Activated CD4-positive, alpha-beta memory T cell treated with anti-CD3 and anti-CD28 coated beads for 36 hours (primary cell): ENCODE measurements at regions of chr3 and their contacts with region 1.

Region 1: GRCh38 chr3:19348929-19349564 is 200.7 kb downstream of the KCNH8 start:
- DNase-seq: no peak
- H3K4me3 Mint-ChIP-seq: no peak overlapping the region
- H3K27ac Mint-ChIP-seq: no peak overlapping the region
- H3K4me1 Mint-ChIP-seq: no peaks in the 10 kb centered on the region
- H3K27me3 Mint-ChIP-seq: no peaks in the 10 kb centered on the region

Region 2: GRCh38 chr3:19065027-19065426 is 284.0 kb before region 1 on chr3:
- CTCF ChIA-PET with region 1: no interaction called
- POLR2A ChIA-PET with region 1: no interaction called
- intact Hi-C with region 1: loop called (anchors 5 kb)
- DNase-seq: no peak
- H3K4me3 Mint-ChIP-seq: no peak overlapping the region
- H3K27ac Mint-ChIP-seq: no peak overlapping the region
- H3K4me1 Mint-ChIP-seq: no peaks in the 10 kb centered on the region
- H3K27me3 Mint-ChIP-seq: peaks cover 3% of the 10 kb centered on the region

Region 3: DNA sequence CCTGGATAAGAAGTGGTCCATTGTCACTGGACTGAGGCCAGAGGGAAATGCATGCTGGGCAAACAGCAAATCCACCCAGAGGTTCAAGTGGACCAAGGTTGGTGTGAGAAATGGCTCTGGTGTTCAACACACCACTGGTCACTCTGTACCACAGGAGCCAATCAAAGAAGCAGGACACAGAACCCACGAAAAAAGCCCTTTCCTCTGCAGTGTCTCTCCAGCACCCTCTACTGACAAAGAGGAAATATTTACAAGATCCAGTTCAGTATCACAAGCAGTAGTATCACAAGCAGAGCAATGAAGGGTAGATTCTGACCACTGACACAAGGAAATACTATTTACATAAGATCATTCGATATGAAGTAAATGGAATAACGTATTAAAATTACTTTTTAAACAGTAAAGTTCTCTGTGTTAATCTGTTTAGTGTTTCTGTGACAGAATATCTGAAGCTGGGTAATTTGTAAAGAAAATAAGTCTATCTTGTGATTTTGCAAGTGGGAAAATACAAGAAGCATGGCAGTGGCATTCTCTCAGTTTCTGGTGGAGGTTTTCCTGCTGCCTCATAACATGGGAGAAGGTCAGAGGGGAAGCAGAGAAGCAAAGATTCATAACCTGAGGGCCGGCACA is 194.3 kb after region 1 on chr3:
- CTCF ChIA-PET with region 1: no interaction called
- POLR2A ChIA-PET with region 1: no interaction called
- intact Hi-C with region 1: loop called (anchors 2 kb)
- DNase-seq: no peak
- H3K4me3 Mint-ChIP-seq: no peak overlapping the region
- H3K27ac Mint-ChIP-seq: no peak overlapping the region
- H3K4me1 Mint-ChIP-seq: no peaks in the 10 kb centered on the region
- H3K27me3 Mint-ChIP-seq: no peaks in the 10 kb centered on the region

Region 4: DNA sequence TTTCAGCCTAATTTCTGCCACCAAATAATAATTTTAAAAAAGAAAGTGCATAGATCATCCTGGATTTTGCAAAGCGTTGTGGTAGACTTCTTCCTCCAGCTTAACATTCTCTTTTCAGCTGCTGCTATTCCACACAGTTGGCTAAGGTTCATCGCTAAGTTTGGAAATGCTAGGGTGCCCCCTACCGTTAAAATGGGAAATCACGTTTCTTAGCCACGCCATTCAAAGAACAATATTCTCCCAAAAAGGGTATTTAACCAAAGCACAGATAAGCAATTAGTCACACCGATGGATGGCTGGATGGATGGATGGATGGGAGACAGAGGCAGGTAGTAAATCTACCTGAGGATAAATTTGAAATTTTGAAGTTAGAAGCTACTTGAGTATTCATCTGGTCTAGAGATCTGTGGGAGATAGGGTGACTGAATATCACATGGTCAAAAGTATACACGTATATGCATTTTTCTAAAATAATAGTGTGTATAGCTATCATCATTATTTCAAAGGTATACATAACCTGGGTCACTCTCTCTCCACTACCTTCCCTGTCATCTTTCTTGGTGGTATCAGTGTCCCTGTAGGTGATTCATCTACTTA is 517.8 kb after region 1 on chr3:
- CTCF ChIA-PET with region 1: interaction called, 41 read pairs
- POLR2A ChIA-PET with region 1: no interaction called
- intact Hi-C with region 1: loop called (anchors 2 kb)
- DNase-seq: peak; percentile 44
- H3K4me3 Mint-ChIP-seq: no peak overlapping the region
- H3K27ac Mint-ChIP-seq: no peak overlapping the region
- H3K4me1 Mint-ChIP-seq: no peaks in the 10 kb centered on the region
- H3K27me3 Mint-ChIP-seq: peaks cover 5% of the 10 kb centered on the region